ENCODE measurements at regions of chr3 and their contacts with region 1.

Region 1: DNA sequence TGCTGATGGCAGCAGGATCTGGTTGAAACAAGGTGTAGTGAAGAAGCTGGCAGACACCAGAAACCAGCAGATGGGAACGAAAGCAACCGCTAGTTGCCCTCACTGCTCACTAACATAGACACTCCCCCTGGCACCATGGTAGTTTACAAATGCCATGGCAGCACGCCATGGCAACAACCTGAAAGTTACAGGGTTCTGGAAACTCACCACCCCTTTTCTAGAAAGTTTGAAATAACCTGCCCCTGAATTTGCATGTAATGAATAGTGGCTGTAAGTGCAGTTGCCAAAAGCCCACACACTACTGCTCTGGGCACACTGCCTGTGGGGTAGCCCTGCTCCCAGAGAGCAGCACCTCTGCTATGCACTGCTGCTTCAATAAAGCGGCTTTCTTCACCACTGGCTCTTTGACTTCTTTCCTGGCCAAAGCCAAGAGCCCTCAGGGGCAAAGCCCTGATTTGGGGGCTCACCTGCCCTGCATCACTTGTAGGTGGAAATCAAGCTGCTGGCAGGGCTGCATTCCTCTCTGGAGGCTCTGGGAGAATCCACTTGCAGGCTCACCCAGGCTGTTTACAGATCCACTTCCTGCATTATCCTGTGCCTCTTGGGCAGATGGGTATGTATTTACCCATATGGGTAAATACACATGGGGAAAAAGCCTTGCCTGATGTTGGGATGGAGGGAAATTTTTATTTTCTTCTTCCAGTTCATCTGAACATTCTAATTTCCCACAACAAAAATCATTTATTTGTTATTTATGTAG is 2.0 kb upstream of the GP9 start:
- DNase-seq: peak in 5 of 14 experiments; percentile 9 to 48 (median 28)
- ATAC-seq: peak; percentile 83
- H3K4me3 ChIP-seq: no peak overlapping the region
- H3K4me3 Mint-ChIP-seq: no peak overlapping the region
- H3K27ac ChIP-seq: no peak overlapping the region
- H3K27ac Mint-ChIP-seq: no peak overlapping the region
- H3K4me1 ChIP-seq: peaks cover 8% of the 10 kb centered on the region
- H3K4me1 Mint-ChIP-seq: peaks cover 9% of the 10 kb centered on the region
- H3K27me3 ChIP-seq: no peaks in the 10 kb centered on the region
- H3K27me3 Mint-ChIP-seq: no peaks in the 10 kb centered on the region
- CTCF ChIP-seq: no peak

Region 2: GRCh38 chr3:129160891-129161859 is 102.6 kb after region 1 on chr3 and contains the start of gene ISY1:
- CTCF ChIA-PET with region 1: interaction called, 16 read pairs
- POLR2A ChIA-PET with region 1: interaction called, 3 read pairs
- intact Hi-C with region 1: no loop called
- DNase-seq: peak; percentile 70 to 97 (median 84)
- ATAC-seq: peak; percentile 74
- H3K4me3 ChIP-seq: peak within 1 kb of the TSS; percentile 82
- H3K4me3 Mint-ChIP-seq: peak within 1 kb of the TSS; percentile 96
- H3K27ac ChIP-seq: peak within 1 kb of the TSS; percentile 92 to 99
- H3K27ac Mint-ChIP-seq: peak within 1 kb of the TSS; percentile 95
- H3K4me1 ChIP-seq: peaks cover 24% of the 10 kb centered on the region
- H3K4me1 Mint-ChIP-seq: peaks cover 55% of the 10 kb centered on the region
- H3K27me3 ChIP-seq: no peaks in the 10 kb centered on the region
- H3K27me3 Mint-ChIP-seq: no peaks in the 10 kb centered on the region
- CTCF ChIP-seq: peak; percentile 76
- total RNA-seq, gene ISY1: 28.2 to 28.5 TPM

Measured in CD4-positive, alpha-beta T cell (primary cell).